CD4-positive, alpha-beta T cell (primary cell): ENCODE measurements at regions of chr4 and their contacts with region 1.

Region 1: DNA sequence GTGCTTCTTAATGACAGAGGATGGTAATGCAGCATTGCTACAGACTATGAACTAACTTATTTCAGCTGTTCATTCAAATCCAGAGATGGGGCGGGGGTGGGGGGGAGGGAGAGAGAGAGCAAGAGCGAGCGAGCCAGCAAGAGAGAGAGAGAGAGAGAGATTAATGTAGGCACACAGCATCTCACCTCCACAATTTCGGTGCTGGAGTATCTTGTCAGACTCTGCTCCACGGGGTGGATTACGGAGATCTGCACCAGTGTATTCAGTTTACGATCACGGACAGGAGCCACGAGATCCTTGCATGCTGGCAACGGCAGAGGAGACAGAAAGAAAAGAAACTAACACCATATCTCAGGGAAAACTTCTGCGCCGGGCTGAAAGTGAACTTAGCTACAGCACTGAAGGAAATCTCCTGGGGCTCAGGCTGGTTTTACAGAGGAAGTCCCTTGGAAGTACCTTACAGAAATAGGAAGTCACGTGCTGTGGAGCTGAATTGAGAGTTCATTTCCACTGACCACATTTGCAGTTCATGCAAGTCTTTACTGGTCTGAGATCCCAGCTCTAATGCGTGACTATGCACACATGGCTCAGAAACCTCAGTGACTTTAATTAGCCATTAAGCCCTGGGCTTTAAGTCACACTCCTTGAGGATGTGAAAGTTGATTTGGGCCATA is 440.9 kb downstream of the INPP4B start:
- DNase-seq: peak; percentile 11 to 83 (median 44)
- ATAC-seq: peak; percentile 64
- H3K4me3 ChIP-seq: peak overlapping the region; percentile 63
- H3K4me3 Mint-ChIP-seq: peak overlapping the region; percentile 99
- H3K27ac ChIP-seq: peak overlapping the region; percentile 62 to 64
- H3K27ac Mint-ChIP-seq: peak overlapping the region; percentile 96
- H3K4me1 ChIP-seq: peaks cover 28% of the 10 kb centered on the region
- H3K4me1 Mint-ChIP-seq: peaks cover 72% of the 10 kb centered on the region
- H3K27me3 ChIP-seq: no peaks in the 10 kb centered on the region
- H3K27me3 Mint-ChIP-seq: no peaks in the 10 kb centered on the region
- CTCF ChIP-seq: no peak

Region 2: GRCh38 chr4:142365387-142365786 is 39.8 kb before region 1 on chr4:
- CTCF ChIA-PET with region 1: interaction called, 4 read pairs
- POLR2A ChIA-PET with region 1: interaction called, 11 read pairs
- intact Hi-C with region 1: loop called (anchors 1 to 2 kb)
- DNase-seq: no peak
- ATAC-seq: no peak
- H3K4me3 ChIP-seq: no peak overlapping the region
- H3K4me3 Mint-ChIP-seq: peak overlapping the region; percentile 8
- H3K27ac ChIP-seq: no peak overlapping the region
- H3K27ac Mint-ChIP-seq: peak overlapping the region; percentile 73
- H3K4me1 ChIP-seq: peaks cover 31% of the 10 kb centered on the region
- H3K4me1 Mint-ChIP-seq: peaks cover 84% of the 10 kb centered on the region
- H3K27me3 ChIP-seq: no peaks in the 10 kb centered on the region
- H3K27me3 Mint-ChIP-seq: no peaks in the 10 kb centered on the region
- CTCF ChIP-seq: no peak

Region 3: GRCh38 chr4:142372530-142373260 is 32.5 kb before region 1 on chr4:
- CTCF ChIA-PET with region 1: interaction called, 4 read pairs
- POLR2A ChIA-PET with region 1: interaction called, 11 read pairs
- intact Hi-C with region 1: loop called (anchors 1 to 2 kb)
- DNase-seq: no peak
- ATAC-seq: no peak
- H3K4me3 ChIP-seq: no peak overlapping the region
- H3K4me3 Mint-ChIP-seq: peak overlapping the region; percentile 32
- H3K27ac ChIP-seq: no peak overlapping the region
- H3K27ac Mint-ChIP-seq: peak overlapping the region; percentile 84
- H3K4me1 ChIP-seq: peaks cover 24% of the 10 kb centered on the region
- H3K4me1 Mint-ChIP-seq: peaks cover 90% of the 10 kb centered on the region
- H3K27me3 ChIP-seq: no peaks in the 10 kb centered on the region
- H3K27me3 Mint-ChIP-seq: no peaks in the 10 kb centered on the region
- CTCF ChIP-seq: no peak

Region 4: DNA sequence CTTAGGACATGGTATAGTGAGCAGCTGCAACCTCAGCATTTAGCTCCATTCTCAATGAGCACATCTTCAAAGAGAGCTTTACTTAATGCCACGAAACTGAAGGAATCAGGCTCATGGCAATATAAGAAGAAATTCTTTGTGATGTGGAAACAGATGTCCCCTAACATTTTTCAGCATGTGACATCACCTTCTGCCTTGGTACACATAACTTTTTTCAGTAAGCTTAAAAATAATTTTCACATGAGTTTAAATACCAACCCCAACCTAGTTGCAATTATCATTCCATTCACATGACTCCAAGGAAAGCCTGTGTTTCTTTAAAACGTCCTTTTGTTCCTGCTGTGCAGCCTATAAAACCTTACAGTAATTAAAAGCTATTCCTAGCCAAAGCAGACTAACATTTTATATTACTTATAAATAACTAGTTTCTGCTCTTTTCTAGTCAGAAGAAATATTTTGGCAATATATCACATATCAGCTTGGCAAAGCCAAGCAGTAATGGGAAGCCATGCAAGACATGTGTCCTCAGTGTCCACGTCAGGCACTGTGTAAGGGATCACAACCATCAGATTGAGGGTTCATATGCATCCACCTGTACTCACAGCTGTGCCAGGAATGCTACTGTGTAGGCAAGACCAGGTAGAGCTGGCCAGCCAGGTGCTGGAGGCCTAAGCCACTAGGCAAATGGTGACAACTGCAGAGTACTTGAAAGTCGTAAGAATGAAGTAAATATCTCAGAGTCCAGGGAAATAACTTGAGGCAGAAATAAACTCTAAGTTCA is 25.7 kb before region 1 on chr4:
- CTCF ChIA-PET with region 1: interaction called, 3 read pairs
- POLR2A ChIA-PET with region 1: interaction called, 14 read pairs
- intact Hi-C with region 1: no loop called
- DNase-seq: no peak
- ATAC-seq: no peak
- H3K4me3 ChIP-seq: no peak overlapping the region
- H3K4me3 Mint-ChIP-seq: peak overlapping the region; percentile 23
- H3K27ac ChIP-seq: no peak overlapping the region
- H3K27ac Mint-ChIP-seq: peak overlapping the region; percentile 84
- H3K4me1 ChIP-seq: peaks cover 21% of the 10 kb centered on the region
- H3K4me1 Mint-ChIP-seq: peaks cover 90% of the 10 kb centered on the region
- H3K27me3 ChIP-seq: no peaks in the 10 kb centered on the region
- H3K27me3 Mint-ChIP-seq: no peaks in the 10 kb centered on the region
- CTCF ChIP-seq: no peak

Region 5: GRCh38 chr4:142386449-142386848 is 18.7 kb before region 1 on chr4:
- CTCF ChIA-PET with region 1: no interaction called
- POLR2A ChIA-PET with region 1: interaction called, 31 read pairs
- intact Hi-C with region 1: loop called (anchors 2 kb)
- DNase-seq: peak in 1 of 14 experiments; percentile 44
- ATAC-seq: peak; percentile 69
- H3K4me3 ChIP-seq: peak overlapping the region; percentile 35
- H3K4me3 Mint-ChIP-seq: peak overlapping the region; percentile 76
- H3K27ac ChIP-seq: no peak overlapping the region
- H3K27ac Mint-ChIP-seq: peak overlapping the region; percentile 84
- H3K4me1 ChIP-seq: peaks cover 23% of the 10 kb centered on the region
- H3K4me1 Mint-ChIP-seq: peaks cover 85% of the 10 kb centered on the region
- H3K27me3 ChIP-seq: no peaks in the 10 kb centered on the region
- H3K27me3 Mint-ChIP-seq: no peaks in the 10 kb centered on the region
- CTCF ChIP-seq: no peak

Region 6: GRCh38 chr4:142416711-142417275 is 11.6 kb after region 1 on chr4:
- CTCF ChIA-PET with region 1: interaction called, 3 read pairs
- POLR2A ChIA-PET with region 1: interaction called, 95 read pairs
- intact Hi-C with region 1: loop called in 1 of 2 experiments (anchors 2 kb)
- DNase-seq: peak in 5 of 14 experiments; percentile 19 to 75 (median 57)
- ATAC-seq: peak; percentile 92
- H3K4me3 ChIP-seq: peak overlapping the region; percentile 36
- H3K4me3 Mint-ChIP-seq: peak overlapping the region; percentile 86
- H3K27ac ChIP-seq: peak overlapping the region; percentile 51 to 78
- H3K27ac Mint-ChIP-seq: peak overlapping the region; percentile 93
- H3K4me1 ChIP-seq: peaks cover 12% of the 10 kb centered on the region
- H3K4me1 Mint-ChIP-seq: peaks cover 47% of the 10 kb centered on the region
- H3K27me3 ChIP-seq: no peaks in the 10 kb centered on the region
- H3K27me3 Mint-ChIP-seq: no peaks in the 10 kb centered on the region
- CTCF ChIP-seq: no peak

Region 7: GRCh38 chr4:142703694-142704309 is 298.6 kb after region 1 on chr4:
- CTCF ChIA-PET with region 1: no interaction called
- POLR2A ChIA-PET with region 1: interaction called, 16 read pairs
- intact Hi-C with region 1: no loop called
- DNase-seq: peak in 10 of 14 experiments; percentile 3 to 82 (median 36)
- ATAC-seq: peak; percentile 79
- H3K4me3 ChIP-seq: peak overlapping the region; percentile 6
- H3K4me3 Mint-ChIP-seq: no peak overlapping the region
- H3K27ac ChIP-seq: peak overlapping the region; percentile 34 to 71
- H3K27ac Mint-ChIP-seq: no peak overlapping the region
- H3K4me1 ChIP-seq: peaks cover 68% of the 10 kb centered on the region
- H3K4me1 Mint-ChIP-seq: peaks cover 31% of the 10 kb centered on the region
- H3K27me3 ChIP-seq: no peaks in the 10 kb centered on the region
- H3K27me3 Mint-ChIP-seq: no peaks in the 10 kb centered on the region
- CTCF ChIP-seq: no peak